Dendritic cell treated with granulocyte-macrophage colony-stimulating factor and Interleukin-4, amounts not matched to agents 40 ng/mL and 50 ng/mL, for 4 days (primary cell): ENCODE measurements at regions of chr14 and their contacts with region 1.

Region 1: DNA sequence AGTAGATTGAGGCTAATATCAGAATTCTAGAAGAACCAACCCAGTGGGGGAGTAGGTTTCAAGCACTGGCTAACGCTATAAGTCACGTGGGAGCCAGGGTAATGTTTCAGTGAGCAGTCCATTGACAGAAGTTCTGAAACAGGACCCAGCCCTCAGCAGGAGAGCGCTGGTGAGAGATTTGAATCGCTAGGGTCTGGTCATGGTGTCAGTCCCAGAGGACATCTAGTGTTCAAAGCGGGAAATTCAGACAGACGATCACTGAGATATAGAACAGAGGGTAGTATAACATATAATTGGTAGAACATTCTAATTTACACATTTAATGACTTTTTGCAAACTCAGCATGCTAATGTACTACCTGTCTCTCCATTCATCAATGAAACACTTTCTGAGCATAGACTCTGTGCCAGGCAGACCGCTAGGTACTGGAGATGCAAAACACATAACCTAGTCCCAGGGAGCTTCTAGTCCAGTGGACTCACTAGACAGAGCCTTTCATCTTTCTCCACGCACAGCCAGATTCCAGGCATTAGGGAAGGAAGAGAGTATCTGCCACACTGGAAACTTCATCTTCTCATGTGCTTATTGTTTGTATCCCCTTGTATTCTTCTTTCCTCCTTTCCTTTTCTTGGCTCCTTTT is 35.4 kb upstream of the RNASE3 start:
- H3K4me3 Mint-ChIP-seq: no peak overlapping the region
- H3K27ac Mint-ChIP-seq: no peak overlapping the region
- H3K4me1 Mint-ChIP-seq: peaks cover 31% of the 10 kb centered on the region
- H3K27me3 Mint-ChIP-seq: no peaks in the 10 kb centered on the region

Region 2: GRCh38 chr14:20662968-20663732 is 192.6 kb before region 1 on chr14:
- intact Hi-C with region 1: no loop called
- H3K4me3 Mint-ChIP-seq: peak overlapping the region; percentile 83
- H3K27ac Mint-ChIP-seq: peak overlapping the region; percentile 52
- H3K4me1 Mint-ChIP-seq: peaks cover 55% of the 10 kb centered on the region
- H3K27me3 Mint-ChIP-seq: peaks cover 36% of the 10 kb centered on the region

Region 3: GRCh38 chr14:20799892-20800544 is 55.8 kb before region 1 on chr14:
- intact Hi-C with region 1: loop called (anchors 1 kb)
- H3K4me3 Mint-ChIP-seq: peak overlapping the region; percentile 87
- H3K27ac Mint-ChIP-seq: peak overlapping the region; percentile 93
- H3K4me1 Mint-ChIP-seq: peaks cover 74% of the 10 kb centered on the region
- H3K27me3 Mint-ChIP-seq: no peaks in the 10 kb centered on the region

Region 4: DNA sequence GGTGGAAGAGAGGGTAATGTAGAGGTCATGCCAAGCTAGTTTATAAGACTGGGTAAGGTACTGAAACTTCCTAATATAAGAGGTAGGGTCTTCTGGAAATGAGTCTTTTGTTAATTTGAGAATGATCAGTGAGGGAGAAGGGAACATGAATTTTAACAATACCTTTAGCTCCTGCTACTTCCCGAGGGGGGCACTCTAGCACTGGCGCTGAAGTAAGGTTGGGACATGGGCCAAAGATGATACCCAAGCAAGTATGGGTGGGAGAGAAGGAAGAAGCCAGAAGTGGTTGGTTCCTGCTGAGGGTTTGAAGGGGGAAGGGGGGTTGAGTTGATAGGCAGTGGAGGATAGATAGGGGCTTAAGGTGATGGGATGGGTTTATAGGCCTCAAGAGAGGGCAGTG is 20.9 kb before region 1 on chr14:
- intact Hi-C with region 1: loop called (anchors 1 kb)
- H3K4me3 Mint-ChIP-seq: no peak overlapping the region
- H3K27ac Mint-ChIP-seq: peak overlapping the region; percentile 74
- H3K4me1 Mint-ChIP-seq: peaks cover 27% of the 10 kb centered on the region
- H3K27me3 Mint-ChIP-seq: no peaks in the 10 kb centered on the region

Region 5: DNA sequence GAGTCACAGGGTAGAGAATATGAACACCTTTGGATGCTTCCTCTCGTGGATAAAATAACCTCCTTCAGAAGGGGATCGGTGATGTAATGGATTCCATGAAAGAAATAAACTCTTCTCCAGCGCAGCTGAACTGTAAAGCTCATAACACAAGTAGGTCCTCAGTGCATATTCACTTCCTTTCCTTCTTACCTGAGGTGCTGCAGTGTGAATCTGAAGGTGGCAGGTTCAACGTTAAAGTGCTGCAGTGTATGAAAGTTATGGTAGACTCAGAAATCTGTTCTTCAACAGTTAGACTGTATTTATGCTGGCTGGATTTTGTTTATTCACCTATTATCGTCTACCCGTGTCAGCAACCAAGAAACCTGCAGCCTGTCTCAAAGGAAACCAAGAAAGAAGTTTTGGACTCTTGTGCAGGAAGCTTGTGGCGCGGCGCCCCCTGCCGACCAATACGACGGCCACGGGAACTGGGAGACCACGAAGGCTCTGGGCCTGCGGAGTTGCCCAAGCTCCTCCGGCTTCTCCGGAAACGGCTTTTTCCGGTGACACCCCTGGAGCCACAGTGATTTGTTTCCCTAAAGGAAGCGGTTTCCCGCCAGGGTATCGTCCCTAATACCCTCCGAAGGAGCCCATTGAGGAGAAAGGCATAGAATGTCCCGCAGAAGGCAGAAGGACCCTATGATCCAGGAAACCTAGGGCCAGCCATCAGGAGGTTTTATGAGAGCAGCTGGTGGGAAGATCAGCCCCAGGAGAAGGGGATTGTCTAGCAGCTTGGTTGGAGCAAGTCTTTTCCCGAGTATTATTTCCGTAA is 17.8 kb after region 1 on chr14:
- intact Hi-C with region 1: loop called (anchors 2 kb)
- H3K4me3 Mint-ChIP-seq: peak overlapping the region; percentile 55
- H3K27ac Mint-ChIP-seq: peak overlapping the region; percentile 68
- H3K4me1 Mint-ChIP-seq: peaks cover 42% of the 10 kb centered on the region
- H3K27me3 Mint-ChIP-seq: no peaks in the 10 kb centered on the region

Region 6: DNA sequence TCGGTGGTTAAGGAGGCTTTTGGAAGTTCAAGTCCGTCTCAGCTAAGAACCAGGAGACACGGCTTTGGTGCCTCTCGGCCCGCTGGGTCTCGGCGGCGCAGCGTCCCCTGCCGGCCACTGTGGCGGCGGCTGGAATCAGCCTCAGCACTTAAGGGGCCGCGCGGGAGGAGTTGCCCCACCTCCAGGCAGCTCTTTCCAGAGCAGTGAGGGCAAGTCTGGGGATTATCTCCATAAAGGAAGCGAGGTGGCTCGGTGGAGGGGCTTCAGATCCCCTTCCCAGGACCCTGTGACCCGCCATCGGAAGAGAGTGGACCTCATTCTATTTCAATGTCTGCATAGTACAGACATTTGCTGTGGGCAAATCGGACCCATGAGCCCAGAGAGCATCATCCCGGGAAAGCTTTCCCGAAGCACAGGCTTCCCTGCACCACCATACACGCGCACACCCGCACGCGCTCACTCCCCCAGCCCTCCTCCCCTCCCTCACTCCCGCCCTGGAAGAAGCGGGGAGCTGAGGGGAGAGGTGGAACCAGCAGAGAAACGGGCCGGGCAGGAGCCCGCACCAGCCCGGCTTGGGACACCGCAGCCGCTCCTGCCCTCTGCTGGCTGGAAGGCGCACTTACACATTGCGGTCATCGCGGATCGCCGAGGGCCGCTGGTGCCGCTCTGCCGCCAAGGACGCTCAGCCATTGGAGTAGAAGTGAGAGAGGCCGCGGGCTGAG is 115.4 kb after region 1 on chr14:
- intact Hi-C with region 1: loop called (anchors 1 kb)
- H3K4me3 Mint-ChIP-seq: peak overlapping the region; percentile 84
- H3K27ac Mint-ChIP-seq: peak overlapping the region; percentile 68
- H3K4me1 Mint-ChIP-seq: peaks cover 25% of the 10 kb centered on the region
- H3K27me3 Mint-ChIP-seq: no peaks in the 10 kb centered on the region